ENCODE measurements at regions of chrX and their contacts with region 1.

Region 1: GRCh38 chrX:1649621-1650020 is 34.8 kb downstream of the ASMT start:
- DNase-seq: no peak
- CTCF ChIP-seq: no peak

Region 2: GRCh38 chrX:2608638-2609430 is 959.2 kb after region 1 on chrX:
- in situ Hi-C with region 1: loop called (anchors 10 kb)
- DNase-seq: peak; percentile 96
- CTCF ChIP-seq: no peak

Measured in GM13976 (cell line).